PC-9 (cell line): ENCODE measurements at regions of chr2 and their contacts with region 1.

Region 1: GRCh38 chr2:10654069-10654468 is 35.7 kb downstream of the NOL10 start:
- DNase-seq: peak; percentile 66 to 99
- H3K4me3 ChIP-seq: no peak overlapping the region
- H3K27ac ChIP-seq: peak overlapping the region; percentile 68
- H3K4me1 ChIP-seq: peaks cover 40% of the 10 kb centered on the region
- H3K27me3 ChIP-seq: no peaks in the 10 kb centered on the region
- CTCF ChIP-seq: no peak

Region 2: DNA sequence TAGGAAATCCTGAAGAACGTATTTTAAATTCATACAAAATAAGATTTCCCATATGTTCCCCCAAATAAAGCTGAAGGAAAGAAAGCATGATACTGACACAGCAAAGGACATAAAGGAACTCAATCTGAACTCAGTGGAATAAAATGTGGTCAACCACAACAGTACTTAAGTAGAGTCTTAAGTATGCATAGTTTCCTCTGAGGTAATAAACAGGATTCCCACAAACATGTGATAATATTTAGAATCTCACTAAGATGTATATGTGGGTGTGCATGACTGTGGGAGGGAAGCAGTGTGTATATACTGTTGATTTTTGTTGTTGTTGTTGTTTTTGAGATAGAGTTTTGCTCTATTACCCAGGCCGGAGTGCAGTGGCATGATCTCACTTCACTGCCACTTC is 33.6 kb before region 1 on chr2:
- CTCF ChIA-PET with region 1: no interaction called
- POLR2A ChIA-PET with region 1: interaction called, 20 read pairs
- intact Hi-C with region 1: no loop called
- DNase-seq: no peak
- H3K4me3 ChIP-seq: no peak overlapping the region
- H3K27ac ChIP-seq: no peak overlapping the region
- H3K4me1 ChIP-seq: no peaks in the 10 kb centered on the region
- H3K27me3 ChIP-seq: no peaks in the 10 kb centered on the region
- CTCF ChIP-seq: no peak